Transverse colon (tissue), 4 donors: ENCODE measurements at regions of chr4 and their contacts with region 1.

Region 1: GRCh38 chr4:53365486-53366300 is at the start of gene SCFD2:
- DNase-seq: peak; percentile 99
- H3K4me3 ChIP-seq: peak within 1 kb of the TSS; percentile 62 to 95 (median 69)
- H3K27ac ChIP-seq: peak within 1 kb of the TSS; percentile 53 to 83 (median 68)
- H3K4me1 ChIP-seq: peaks cover 3 to 38% (median 16%) of the 10 kb centered on the region in 4 donors
- H3K27me3 ChIP-seq: no peaks in the 10 kb centered on the region
- CTCF ChIP-seq: no peak
- EP300 ChIP-seq: no peak
- POLR2A ChIP-seq: no peak
- total RNA-seq, gene SCFD2: 12.7 to 23.7 (median 18.3) TPM

Region 2: GRCh38 chr4:52712172-52712990 is 653.3 kb before region 1 on chr4:
- in situ Hi-C with region 1: loop called in 1 of 4 experiments (anchors 25 kb)
- intact Hi-C with region 1: no loop called
- DNase-seq: peak; percentile 99
- H3K4me3 ChIP-seq: peak overlapping the region; percentile 65 to 96 (median 86)
- H3K27ac ChIP-seq: peak overlapping the region; percentile 95 to 97 (median 96)
- H3K4me1 ChIP-seq: peaks cover 16 to 31% (median 20%) of the 10 kb centered on the region in 4 donors
- H3K27me3 ChIP-seq: no peaks in the 10 kb centered on the region
- CTCF ChIP-seq: no peak
- EP300 ChIP-seq: no peak
- POLR2A ChIP-seq: peak; percentile 97

Region 3: GRCh38 chr4:54015423-54016030 is 649.8 kb after region 1 on chr4:
- in situ Hi-C with region 1: no loop called
- intact Hi-C with region 1: no loop called
- DNase-seq: no peak
- H3K4me3 ChIP-seq: no peak overlapping the region
- H3K27ac ChIP-seq: no peak overlapping the region
- H3K4me1 ChIP-seq: peaks cover 0 to 2% (median 0%) of the 10 kb centered on the region in 4 donors
- H3K27me3 ChIP-seq: no peaks in the 10 kb centered on the region
- CTCF ChIP-seq: no peak
- EP300 ChIP-seq: no peak
- POLR2A ChIP-seq: no peak

Region 4: GRCh38 chr4:54064295-54065111 is 698.8 kb after region 1 on chr4 and contains the start of gene CHIC2:
- in situ Hi-C with region 1: loop called in 2 of 4 experiments (anchors 25 kb)
- intact Hi-C with region 1: no loop called
- DNase-seq: peak; percentile 96
- H3K4me3 ChIP-seq: peak within 1 kb of the TSS; percentile 86 to 99 (median 96)
- H3K27ac ChIP-seq: peak within 1 kb of the TSS; percentile 95 to 98 (median 97)
- H3K4me1 ChIP-seq: peaks cover 14 to 50% (median 31%) of the 10 kb centered on the region in 4 donors
- H3K27me3 ChIP-seq: no peaks in the 10 kb centered on the region
- CTCF ChIP-seq: no peak
- EP300 ChIP-seq: peak; percentile 61
- POLR2A ChIP-seq: peak; percentile 97
- total RNA-seq, gene CHIC2: 36.2 to 106 (median 52.0) TPM

Region 5: DNA sequence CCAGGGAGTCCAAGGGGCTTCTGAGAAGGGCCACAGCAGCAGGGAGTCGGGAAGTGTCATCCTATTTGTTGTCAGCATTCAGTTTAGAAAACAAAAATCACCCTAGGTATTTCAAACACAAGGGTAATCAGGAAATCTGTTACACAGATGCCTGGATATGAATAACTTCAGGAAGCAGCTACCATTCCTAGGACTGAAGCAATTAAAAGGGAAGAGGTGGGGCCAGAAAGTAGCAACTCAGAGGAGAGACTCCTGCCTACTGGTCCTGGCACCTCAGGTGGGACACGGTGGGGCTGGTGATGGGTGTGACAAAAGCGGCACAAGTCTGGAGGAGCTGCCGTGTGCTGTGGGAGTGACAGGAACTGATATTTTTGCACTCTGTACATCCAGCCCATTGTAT is 971.3 kb after region 1 on chr4:
- in situ Hi-C with region 1: no loop called
- intact Hi-C with region 1: no loop called
- DNase-seq: no peak
- H3K4me3 ChIP-seq: no peak overlapping the region
- H3K27ac ChIP-seq: no peak overlapping the region
- H3K4me1 ChIP-seq: no peaks in the 10 kb centered on the region
- H3K27me3 ChIP-seq: no peaks in the 10 kb centered on the region
- CTCF ChIP-seq: no peak
- EP300 ChIP-seq: no peak
- POLR2A ChIP-seq: no peak